ENCODE measurements at regions of chr9 and their contacts with region 1.

Region 1: DNA sequence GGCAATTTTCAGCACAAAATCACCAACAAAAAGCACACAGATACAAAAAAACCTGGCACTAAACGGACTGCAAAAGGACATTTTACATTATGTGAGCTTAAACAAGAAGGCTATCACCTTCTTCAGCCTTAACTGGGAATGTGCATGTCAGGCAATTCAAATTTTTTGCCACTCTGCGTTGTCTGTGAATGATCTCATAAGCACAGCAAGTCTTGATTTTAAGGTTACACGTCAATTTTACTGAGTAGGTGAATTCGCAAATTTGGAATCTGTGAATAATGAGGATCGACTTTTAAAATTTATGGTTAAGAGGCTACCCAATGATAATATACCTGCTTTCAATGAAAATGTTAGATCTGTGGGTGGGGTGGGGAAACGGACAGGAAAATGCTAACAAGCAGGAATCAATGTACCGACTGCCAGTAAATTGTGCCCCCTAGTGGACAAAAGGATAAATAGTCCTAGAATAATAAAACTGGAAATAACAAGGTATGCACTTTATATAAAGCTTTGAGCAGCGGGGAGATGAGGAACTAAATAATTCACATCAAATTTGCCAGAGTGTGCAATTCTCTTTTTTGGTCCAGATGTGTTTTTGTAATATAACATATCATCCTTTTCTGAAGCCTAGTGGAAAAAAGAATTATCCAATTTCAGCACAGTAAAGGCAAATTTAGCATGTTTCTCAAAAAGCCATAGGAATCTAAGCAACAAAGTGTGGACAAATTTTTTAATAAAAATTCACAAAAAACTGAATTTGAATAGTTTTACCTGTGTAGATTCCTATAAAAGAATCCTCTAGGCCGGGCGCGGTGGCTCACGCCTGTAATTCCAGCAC is 20.5 kb downstream of the EQTN start:
- DNase-seq: peak; percentile 38 to 70
- H3K4me3 ChIP-seq: no peak overlapping the region
- H3K4me1 ChIP-seq: peaks cover 3% of the 10 kb centered on the region; the same call in 1 of the 2 replicates
- H3K27me3 ChIP-seq: no peaks in the 10 kb centered on the region

Region 2: GRCh38 chr9:26650325-26650724 is 626.1 kb before region 1 on chr9:
- in situ Hi-C with region 1: no loop called
- DNase-seq: no peak
- H3K4me3 ChIP-seq: no peak overlapping the region
- H3K4me1 ChIP-seq: no peaks in the 10 kb centered on the region
- H3K27me3 ChIP-seq: no peaks in the 10 kb centered on the region

Region 3: GRCh38 chr9:27033823-27034403 is 242.5 kb before region 1 on chr9:
- in situ Hi-C with region 1: loop called (anchors 10 kb)
- DNase-seq: peak; percentile 46 to 81
- H3K4me3 ChIP-seq: no peak overlapping the region
- H3K4me1 ChIP-seq: no peaks in the 10 kb centered on the region
- H3K27me3 ChIP-seq: no peaks in the 10 kb centered on the region

Region 4: DNA sequence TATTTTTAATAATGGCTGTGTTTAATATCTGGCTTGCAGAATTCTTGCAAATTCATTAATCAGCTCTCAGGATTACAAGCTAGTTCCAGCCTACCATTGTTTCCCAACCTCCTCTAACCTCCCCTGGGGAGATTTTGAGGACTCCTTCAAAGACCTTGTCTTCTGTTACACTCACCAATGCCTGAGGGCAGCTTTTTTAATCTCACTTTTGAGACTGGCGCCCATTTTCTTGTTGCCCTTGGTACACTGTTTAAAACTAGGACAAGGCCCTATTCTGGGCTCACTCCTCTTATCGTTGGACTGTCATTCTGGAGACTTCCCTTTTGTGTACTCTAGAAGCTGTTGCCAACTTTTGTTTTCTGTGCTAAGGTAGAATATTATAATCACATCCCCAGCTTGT is 34.2 kb after region 1 on chr9:
- in situ Hi-C with region 1: no loop called
- DNase-seq: peak; percentile 61 to 81
- H3K4me3 ChIP-seq: no peak overlapping the region
- H3K4me1 ChIP-seq: peaks cover 40% of the 10 kb centered on the region
- H3K27me3 ChIP-seq: no peaks in the 10 kb centered on the region

Region 5: GRCh38 chr9:27473111-27473529 is 196.7 kb after region 1 on chr9:
- in situ Hi-C with region 1: no loop called
- DNase-seq: peak; percentile 52 to 68
- H3K4me3 ChIP-seq: no peak overlapping the region
- H3K4me1 ChIP-seq: peaks cover 26% of the 10 kb centered on the region
- H3K27me3 ChIP-seq: no peaks in the 10 kb centered on the region